HepG2 (cell line): ENCODE measurements at regions of chr2 and their contacts with region 1.

Region 1: GRCh38 chr2:45137966-45138695 is 128.9 kb upstream of the SIX2 start:
- DNase-seq: no peak
- ATAC-seq: no peak
- H3K4me3 ChIP-seq: no peak overlapping the region
- H3K27ac ChIP-seq: no peak overlapping the region
- H3K4me1 ChIP-seq: no peaks in the 10 kb centered on the region
- H3K27me3 ChIP-seq: peaks cover 0 to 7% of the 10 kb centered on the region in 2 experiments; a peak in 3 of 5 replicates
- CTCF ChIP-seq: no peak
- EP300 ChIP-seq: no peak
- POLR2A ChIP-seq: no peak
- RAD21 ChIP-seq: no peak

Region 2: GRCh38 chr2:44560352-44560751 is 577.8 kb before region 1 on chr2:
- CTCF ChIA-PET with region 1: no interaction called
- POLR2A ChIA-PET with region 1: no interaction called
- in situ Hi-C with region 1: no loop called
- intact Hi-C with region 1: no loop called
- DNase-seq: no peak
- ATAC-seq: no peak
- H3K4me3 ChIP-seq: no peak overlapping the region
- H3K27ac ChIP-seq: no peak overlapping the region
- H3K4me1 ChIP-seq: 0 out of 2 replicates have a peak, but pooled peaks cover 7% of the 10 kb centered on the region
- H3K27me3 ChIP-seq: no peaks in the 10 kb centered on the region
- CTCF ChIP-seq: peak; percentile 50
- EP300 ChIP-seq: no peak
- POLR2A ChIP-seq: no peak
- RAD21 ChIP-seq: no peak

Region 3: DNA sequence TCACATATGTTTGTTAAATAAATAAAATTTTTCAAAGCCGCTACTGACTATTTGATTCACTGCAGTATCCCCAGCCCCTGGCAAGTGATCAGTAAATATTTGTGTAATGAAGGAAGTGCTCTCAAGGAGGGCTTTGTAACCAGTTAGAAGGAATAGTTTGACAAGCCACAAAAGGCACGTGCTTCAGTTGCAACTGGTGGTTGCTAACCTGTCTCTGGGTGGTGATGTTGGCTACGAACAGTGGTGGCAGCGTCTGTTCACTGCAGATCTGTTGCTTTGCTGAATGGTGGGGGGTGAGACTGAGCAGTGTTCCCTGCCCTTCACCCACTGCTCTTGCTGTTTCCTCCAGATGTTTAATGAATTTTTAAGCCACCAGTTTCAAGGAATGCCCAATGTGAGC is 55.0 kb before region 1 on chr2:
- CTCF ChIA-PET with region 1: no interaction called
- POLR2A ChIA-PET with region 1: no interaction called
- in situ Hi-C with region 1: no loop called
- intact Hi-C with region 1: no loop called
- DNase-seq: no peak
- ATAC-seq: no peak
- H3K4me3 ChIP-seq: no peak overlapping the region
- H3K27ac ChIP-seq: no peak overlapping the region
- H3K4me1 ChIP-seq: no peaks in the 10 kb centered on the region
- H3K27me3 ChIP-seq: 0 out of 5 replicates have a peak, but pooled peaks cover 0 to 3% of the 10 kb centered on the region in 2 experiments
- CTCF ChIP-seq: no peak
- EP300 ChIP-seq: no peak
- POLR2A ChIP-seq: no peak
- RAD21 ChIP-seq: no peak

Region 4: DNA sequence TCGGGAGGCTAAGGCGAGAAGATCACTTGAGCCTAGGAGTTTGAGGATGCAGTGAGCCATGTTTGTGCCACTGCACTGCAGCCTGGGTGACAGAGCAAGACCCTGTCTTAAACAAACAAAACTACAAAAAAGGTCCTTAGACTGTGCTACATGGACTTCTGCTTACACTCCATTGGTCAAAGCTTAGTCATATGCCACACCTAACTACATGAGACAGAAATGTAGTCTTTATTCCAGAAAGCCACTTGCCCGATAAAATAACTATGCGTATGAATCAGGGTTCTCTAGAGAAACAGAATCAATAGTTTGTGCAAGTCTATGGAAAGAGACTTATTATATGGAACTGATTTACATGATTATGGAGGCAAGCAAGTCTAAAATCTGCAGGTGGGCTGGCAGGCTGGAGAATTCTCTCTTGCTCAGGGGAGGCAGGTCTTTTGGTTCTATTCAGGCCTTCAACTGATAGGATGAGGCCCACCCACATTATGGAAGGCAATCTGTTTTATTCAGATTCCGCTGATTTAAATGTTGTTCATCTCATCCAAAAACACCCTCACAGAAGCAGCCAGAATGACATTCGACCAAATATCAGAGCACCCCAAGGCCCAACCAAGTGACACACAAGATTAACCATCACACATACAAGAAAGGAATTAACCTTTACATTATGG is 14.5 kb before region 1 on chr2:
- CTCF ChIA-PET with region 1: no interaction called
- POLR2A ChIA-PET with region 1: no interaction called
- in situ Hi-C with region 1: no loop called
- intact Hi-C with region 1: no loop called
- DNase-seq: no peak
- ATAC-seq: no peak
- H3K4me3 ChIP-seq: no peak overlapping the region
- H3K27ac ChIP-seq: no peak overlapping the region
- H3K4me1 ChIP-seq: 0 out of 2 replicates have a peak, but pooled peaks cover 8% of the 10 kb centered on the region
- H3K27me3 ChIP-seq: 0 out of 5 replicates have a peak, but pooled peaks cover 0 to 4% of the 10 kb centered on the region in 2 experiments
- CTCF ChIP-seq: no peak
- EP300 ChIP-seq: no peak
- POLR2A ChIP-seq: no peak
- RAD21 ChIP-seq: no peak

Region 5: DNA sequence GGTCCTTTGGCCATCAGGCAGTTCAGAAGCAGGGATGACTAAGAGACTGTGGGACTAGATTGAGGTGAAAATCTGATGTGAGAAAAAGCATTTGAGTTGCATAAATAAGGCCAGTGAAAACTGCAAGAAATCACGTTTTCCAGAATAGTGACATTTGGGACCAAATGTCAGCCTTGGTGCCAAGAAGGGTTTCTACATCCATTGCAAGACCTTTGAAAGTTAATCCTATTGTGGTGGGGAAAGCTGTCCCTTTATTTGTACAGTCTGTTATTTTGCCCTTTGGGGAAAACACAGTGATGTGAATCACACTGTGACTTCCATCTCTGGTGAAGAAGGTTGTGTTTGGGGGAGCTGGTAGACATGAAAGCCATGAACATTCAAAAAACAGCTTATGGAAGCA is 24.6 kb after region 1 on chr2:
- CTCF ChIA-PET with region 1: no interaction called
- POLR2A ChIA-PET with region 1: no interaction called
- in situ Hi-C with region 1: no loop called
- intact Hi-C with region 1: loop called (anchors 1 kb)
- DNase-seq: no peak
- ATAC-seq: no peak
- H3K4me3 ChIP-seq: no peak overlapping the region
- H3K27ac ChIP-seq: no peak overlapping the region
- H3K4me1 ChIP-seq: no peaks in the 10 kb centered on the region
- H3K27me3 ChIP-seq: peaks cover 0 to 8% of the 10 kb centered on the region in 2 experiments; a peak in 2 of 5 replicates
- CTCF ChIP-seq: no peak
- EP300 ChIP-seq: no peak
- POLR2A ChIP-seq: no peak
- RAD21 ChIP-seq: no peak